ENCODE measurements at regions of chr6 and their contacts with region 1.

Region 1: GRCh38 chr6:90222724-90223198 is 73.9 kb downstream of the BACH2 start:
- H3K4me3 Mint-ChIP-seq: no peak overlapping the region
- H3K27ac Mint-ChIP-seq: no peak overlapping the region
- H3K4me1 Mint-ChIP-seq: no peaks in the 10 kb centered on the region
- H3K27me3 Mint-ChIP-seq: no peaks in the 10 kb centered on the region

Region 2: GRCh38 chr6:90144396-90144795 is 78.4 kb before region 1 on chr6:
- intact Hi-C with region 1: loop called (anchors 10 kb)
- H3K4me3 Mint-ChIP-seq: no peak overlapping the region
- H3K27ac Mint-ChIP-seq: no peak overlapping the region
- H3K4me1 Mint-ChIP-seq: peaks cover 11% of the 10 kb centered on the region
- H3K27me3 Mint-ChIP-seq: no peaks in the 10 kb centered on the region

Measured in dendritic cell treated with granulocyte-macrophage colony-stimulating factor and Interleukin-4, amounts not matched to agents 40 ng/mL and 50 ng/mL, for 4 days (primary cell).